ENCODE measurements at regions of chr15 and their contacts with region 1.

Region 1: GRCh38 chr15:66700802-66701421 is 1.1 kb upstream of the SMAD6 start:
- DNase-seq: peak; percentile 96
- H3K4me3 Mint-ChIP-seq: peak overlapping the region; percentile 90
- H3K27ac Mint-ChIP-seq: peak overlapping the region; percentile 78
- H3K4me1 Mint-ChIP-seq: peaks cover 19% of the 10 kb centered on the region
- H3K27me3 Mint-ChIP-seq: peaks cover 24% of the 10 kb centered on the region

Region 2: DNA sequence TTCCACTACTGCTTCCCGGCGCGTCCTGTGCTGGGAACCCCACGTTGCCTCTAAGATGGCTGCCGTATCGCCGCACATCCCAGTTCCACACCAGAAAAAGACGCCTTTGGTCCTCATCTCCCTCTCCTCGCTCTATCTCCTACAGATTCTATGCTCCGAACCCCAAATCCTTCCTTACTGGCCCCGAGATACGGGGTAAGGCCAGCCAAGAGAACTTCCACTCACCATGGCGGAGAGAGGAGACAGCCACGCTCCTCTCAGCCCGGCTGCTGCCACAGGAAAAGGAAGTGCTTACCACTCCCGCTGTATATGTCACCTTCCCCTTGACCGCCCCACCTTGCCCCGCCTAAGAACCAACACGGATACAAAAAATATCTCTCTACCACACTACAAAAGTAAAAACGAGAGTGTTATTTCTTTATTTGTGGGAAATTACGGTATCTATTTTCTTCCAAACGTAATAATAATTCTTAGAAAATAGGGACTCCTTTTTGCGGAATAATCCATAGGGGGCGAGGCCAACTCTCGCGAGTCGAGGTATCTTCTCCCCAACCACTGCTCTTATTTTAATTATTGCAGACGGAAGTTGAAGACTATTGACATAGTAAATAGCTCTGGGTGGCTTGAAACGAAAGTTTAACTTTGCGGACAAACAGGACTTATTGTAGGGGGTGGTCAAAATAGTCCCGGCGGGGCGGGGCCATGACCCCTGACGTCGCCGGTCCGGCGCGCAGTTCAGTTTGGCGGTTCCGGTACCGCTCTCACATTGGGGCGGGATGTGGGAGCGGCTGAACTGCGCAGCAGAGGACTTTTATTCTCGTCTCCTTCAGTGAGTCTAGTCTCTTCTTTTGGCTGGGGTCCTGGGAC is 196.1 kb before region 1 on chr15 and contains the starts of genes RPL4 and ZWILCH:
- intact Hi-C with region 1: loop called (anchors 2 kb)
- DNase-seq: peak; percentile 95
- H3K4me3 Mint-ChIP-seq: peak within 1 kb of the TSS; percentile 92
- H3K27ac Mint-ChIP-seq: peak within 1 kb of the TSS; percentile 98
- H3K4me1 Mint-ChIP-seq: peaks cover 48% of the 10 kb centered on the region
- H3K27me3 Mint-ChIP-seq: no peaks in the 10 kb centered on the region
- total RNA-seq, gene RPL4: 3,393 and 3,435 TPM in 2 replicates
- total RNA-seq, gene ZWILCH: 37.1 and 41.1 TPM in 2 replicates

Region 3: DNA sequence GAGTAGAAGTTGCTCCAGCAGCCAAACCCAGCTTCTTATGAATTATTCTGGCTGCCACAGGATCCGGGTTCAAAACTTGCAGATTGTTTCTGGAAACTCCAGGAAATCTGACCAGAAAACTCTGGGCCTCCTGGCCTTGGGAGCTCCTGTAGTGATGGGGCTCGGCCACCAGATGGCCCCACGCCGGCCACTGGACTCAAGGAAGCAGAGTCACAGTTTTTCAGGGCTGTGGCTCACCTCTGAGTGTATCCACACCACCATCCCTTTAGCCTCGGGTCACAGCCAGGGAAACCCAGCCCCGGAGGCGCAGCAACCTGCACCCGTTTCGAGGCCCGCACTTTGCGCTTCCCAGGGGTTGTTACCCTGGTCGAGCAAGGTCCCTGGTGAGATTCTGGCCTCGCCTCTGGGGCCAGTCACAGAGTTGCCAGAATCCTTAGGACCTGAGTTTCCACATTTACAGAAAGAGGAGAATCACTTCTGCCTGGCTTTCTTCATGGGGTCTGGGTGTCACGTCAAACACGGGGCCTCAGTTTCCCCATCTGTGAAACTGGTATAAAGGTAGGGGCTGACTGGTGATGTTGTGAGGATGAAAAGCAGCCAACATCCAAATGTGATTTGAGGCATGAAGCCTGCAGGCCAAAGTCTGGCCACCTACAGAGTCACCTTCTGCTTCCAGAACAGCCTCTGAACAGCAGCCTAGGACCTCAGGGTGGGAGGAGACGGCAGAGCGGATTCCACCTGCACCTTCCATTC is 81.6 kb before region 1 on chr15:
- intact Hi-C with region 1: loop called (anchors 10 kb)
- DNase-seq: peak; percentile 85
- H3K4me3 Mint-ChIP-seq: no peak overlapping the region
- H3K27ac Mint-ChIP-seq: no peak overlapping the region
- H3K4me1 Mint-ChIP-seq: peaks cover 3% of the 10 kb centered on the region
- H3K27me3 Mint-ChIP-seq: peaks cover 22% of the 10 kb centered on the region

Region 4: DNA sequence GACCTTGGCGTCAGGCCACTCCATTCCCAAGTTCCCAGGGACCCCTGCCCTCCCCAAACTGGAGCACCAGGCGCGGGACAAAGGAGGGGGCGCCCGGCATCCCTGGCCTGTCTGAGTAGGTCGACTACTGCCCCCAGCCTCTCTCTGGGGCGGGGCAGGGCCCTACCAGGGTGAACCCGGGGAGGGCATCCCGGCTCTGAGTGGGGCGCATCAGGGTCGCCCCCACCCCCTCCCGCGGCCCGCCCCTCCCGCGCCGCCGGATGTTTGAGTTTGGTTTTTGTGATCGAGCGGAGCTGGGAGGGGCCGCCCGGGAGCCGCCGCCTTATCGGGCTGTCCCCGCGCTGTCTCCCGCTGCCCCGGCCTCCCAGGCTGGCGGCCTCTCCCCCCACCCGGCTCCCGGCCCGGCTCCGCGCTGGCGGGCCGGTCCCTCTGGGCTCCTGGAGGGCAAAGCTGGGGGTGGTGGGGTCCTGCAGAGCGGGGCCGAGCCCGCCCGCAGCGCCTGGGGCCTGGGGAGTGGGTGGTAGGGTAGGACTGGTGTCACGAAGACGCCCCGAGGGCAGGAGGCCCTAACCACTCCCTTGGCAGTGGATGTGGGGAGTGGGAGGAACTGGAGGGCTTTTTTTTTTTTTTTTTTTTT is 46.1 kb before region 1 on chr15:
- intact Hi-C with region 1: loop called (anchors 5 kb)
- DNase-seq: peak; percentile 85
- H3K4me3 Mint-ChIP-seq: peak overlapping the region; percentile 66
- H3K27ac Mint-ChIP-seq: no peak overlapping the region
- H3K4me1 Mint-ChIP-seq: peaks cover 10% of the 10 kb centered on the region
- H3K27me3 Mint-ChIP-seq: peaks cover 9% of the 10 kb centered on the region

Region 5: DNA sequence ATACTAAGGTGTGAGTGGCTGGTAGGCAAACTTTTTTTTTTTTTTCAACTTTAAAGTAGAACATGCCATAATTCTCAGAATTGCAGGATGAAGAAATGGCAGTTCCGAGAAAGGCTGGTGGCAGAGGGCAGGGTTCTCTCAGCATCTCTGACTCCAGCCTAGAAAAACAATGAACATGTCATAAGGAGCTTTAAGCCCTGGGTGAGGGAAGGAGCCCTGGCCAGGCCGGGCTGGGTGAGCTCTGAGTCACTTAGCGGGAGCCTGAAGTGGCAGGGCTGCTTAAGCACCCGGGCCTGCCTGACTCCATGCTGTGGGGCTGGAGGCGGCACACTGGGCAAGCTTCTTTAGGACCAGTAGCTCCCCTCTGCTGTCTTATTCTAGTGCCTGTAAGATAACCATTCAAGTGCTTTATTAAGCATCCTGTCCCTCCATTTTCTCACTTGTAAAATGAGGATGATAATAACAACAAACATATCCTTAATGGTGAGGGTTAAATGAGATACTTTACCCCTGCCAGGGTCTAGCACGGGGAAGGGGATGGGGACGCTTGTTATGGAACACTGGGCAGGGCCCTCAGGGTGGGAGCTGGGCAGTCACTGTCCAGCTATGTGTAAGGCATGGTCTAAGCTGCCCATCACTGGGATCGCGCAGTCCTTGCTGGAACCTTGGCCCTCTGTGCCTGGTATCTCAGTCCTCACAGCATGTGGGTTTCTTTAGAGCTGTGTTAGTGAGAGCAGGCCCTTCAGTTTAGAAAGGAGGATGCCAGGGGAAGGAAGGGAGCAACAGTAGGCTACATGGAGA is 19.5 kb after region 1 on chr15:
- intact Hi-C with region 1: loop called (anchors 2 kb)
- DNase-seq: peak; percentile 80
- H3K4me3 Mint-ChIP-seq: peak overlapping the region; percentile 8
- H3K27ac Mint-ChIP-seq: peak overlapping the region; percentile 74
- H3K4me1 Mint-ChIP-seq: peaks cover 33% of the 10 kb centered on the region
- H3K27me3 Mint-ChIP-seq: peaks cover 4% of the 10 kb centered on the region

Region 6: GRCh38 chr15:66819084-66819483 is 118.2 kb after region 1 on chr15:
- intact Hi-C with region 1: no loop called
- DNase-seq: no peak
- H3K4me3 Mint-ChIP-seq: no peak overlapping the region
- H3K27ac Mint-ChIP-seq: no peak overlapping the region
- H3K4me1 Mint-ChIP-seq: no peaks in the 10 kb centered on the region
- H3K27me3 Mint-ChIP-seq: peaks cover 13% of the 10 kb centered on the region